ENCODE measurements at regions of chr12 and their contacts with region 1.

Region 1: GRCh38 chr12:11730299-11731041 is 81.0 kb downstream of the ETV6 start:
- DNase-seq: no peak
- H3K4me3 Mint-ChIP-seq: peak overlapping the region; percentile 28
- H3K27ac Mint-ChIP-seq: peak overlapping the region; percentile 78
- H3K4me1 Mint-ChIP-seq: peaks cover 75% of the 10 kb centered on the region
- H3K27me3 Mint-ChIP-seq: no peaks in the 10 kb centered on the region

Region 2: DNA sequence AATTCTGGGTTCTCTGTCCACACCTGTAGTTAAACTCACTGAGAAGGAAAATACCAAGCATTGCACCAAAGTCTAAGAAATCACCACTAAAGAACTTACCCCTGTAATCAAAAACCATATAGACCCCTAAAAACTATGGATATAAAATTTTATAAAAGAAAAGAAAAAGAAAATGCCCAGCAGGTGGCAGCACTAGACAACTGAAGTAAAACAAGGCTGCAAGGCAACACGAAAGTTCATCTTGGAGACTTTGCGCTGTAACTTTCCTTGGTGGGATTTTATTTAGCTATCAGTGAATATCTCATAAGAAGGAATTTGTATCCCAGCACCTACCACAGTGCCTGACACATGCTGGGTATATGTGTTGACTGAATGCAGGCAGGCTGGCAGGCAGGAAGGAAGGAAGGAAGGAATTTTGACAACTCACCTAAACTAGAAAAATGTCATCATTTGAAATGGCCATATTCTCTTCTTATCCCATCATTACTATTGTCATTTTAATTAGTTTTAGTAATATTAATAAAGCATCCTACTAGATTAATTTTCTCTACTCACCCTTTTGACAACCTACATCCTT is 149.2 kb before region 1 on chr12:
- intact Hi-C with region 1: loop called (anchors 10 kb)
- DNase-seq: peak; percentile 32
- H3K4me3 Mint-ChIP-seq: no peak overlapping the region
- H3K27ac Mint-ChIP-seq: no peak overlapping the region
- H3K4me1 Mint-ChIP-seq: peaks cover 14% of the 10 kb centered on the region
- H3K27me3 Mint-ChIP-seq: peaks cover 38% of the 10 kb centered on the region

Region 3: DNA sequence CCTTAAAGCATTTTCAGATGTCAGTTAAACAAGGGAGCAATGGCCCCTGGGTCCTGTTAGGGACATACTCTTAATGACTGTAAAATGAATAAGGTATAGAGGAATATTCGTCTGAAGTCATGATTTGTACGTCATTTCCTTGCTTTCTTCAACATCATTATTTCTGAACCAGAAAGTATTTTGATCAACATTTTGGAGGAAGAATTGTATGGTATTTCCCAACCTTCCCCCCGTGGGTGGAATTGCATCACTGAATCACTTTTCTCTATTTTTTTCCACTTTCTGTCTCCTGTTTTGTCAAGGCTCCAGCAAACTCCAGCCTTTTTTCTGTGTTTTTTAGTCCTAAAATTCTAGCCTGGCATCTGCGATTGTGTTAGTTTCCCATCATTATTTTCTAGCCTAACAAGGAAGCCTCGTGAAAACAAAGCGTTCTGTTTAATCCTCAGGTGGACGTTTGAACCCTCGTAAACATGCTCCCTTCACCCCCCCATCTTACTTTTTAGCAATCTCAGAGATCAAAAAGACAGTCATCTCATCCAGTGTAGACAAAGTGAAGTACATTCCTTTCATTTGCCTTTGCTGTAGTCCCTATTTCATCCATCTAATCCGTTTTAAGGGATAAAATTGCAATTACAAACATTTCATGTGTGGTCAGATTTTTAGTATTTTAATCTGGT is 18.7 kb before region 1 on chr12:
- intact Hi-C with region 1: loop called (anchors 2 kb)
- DNase-seq: no peak
- H3K4me3 Mint-ChIP-seq: no peak overlapping the region
- H3K27ac Mint-ChIP-seq: no peak overlapping the region
- H3K4me1 Mint-ChIP-seq: peaks cover 42% of the 10 kb centered on the region
- H3K27me3 Mint-ChIP-seq: no peaks in the 10 kb centered on the region

Region 4: GRCh38 chr12:11765817-11766794 is 35.6 kb after region 1 on chr12:
- intact Hi-C with region 1: loop called (anchors 2 kb)
- DNase-seq: no peak
- H3K4me3 Mint-ChIP-seq: peak overlapping the region; percentile 63
- H3K27ac Mint-ChIP-seq: peak overlapping the region; percentile 87
- H3K4me1 Mint-ChIP-seq: peaks cover 77% of the 10 kb centered on the region
- H3K27me3 Mint-ChIP-seq: no peaks in the 10 kb centered on the region

Measured in activated T-helper 2 cell treated with anti-CD3 and anti-CD28 coated beads, Interferon-gamma antibody, Interleukin-2, Interleukin-4, amounts not matched to agents 10 μg/mL and 5 μg/mL and 100 μg/mL, durations not matched to agents 14 hours and 24 hours and 36 hours (primary cell).